B cell (primary cell): ENCODE measurements at regions of chr6 and their contacts with region 1.

Region 1: DNA sequence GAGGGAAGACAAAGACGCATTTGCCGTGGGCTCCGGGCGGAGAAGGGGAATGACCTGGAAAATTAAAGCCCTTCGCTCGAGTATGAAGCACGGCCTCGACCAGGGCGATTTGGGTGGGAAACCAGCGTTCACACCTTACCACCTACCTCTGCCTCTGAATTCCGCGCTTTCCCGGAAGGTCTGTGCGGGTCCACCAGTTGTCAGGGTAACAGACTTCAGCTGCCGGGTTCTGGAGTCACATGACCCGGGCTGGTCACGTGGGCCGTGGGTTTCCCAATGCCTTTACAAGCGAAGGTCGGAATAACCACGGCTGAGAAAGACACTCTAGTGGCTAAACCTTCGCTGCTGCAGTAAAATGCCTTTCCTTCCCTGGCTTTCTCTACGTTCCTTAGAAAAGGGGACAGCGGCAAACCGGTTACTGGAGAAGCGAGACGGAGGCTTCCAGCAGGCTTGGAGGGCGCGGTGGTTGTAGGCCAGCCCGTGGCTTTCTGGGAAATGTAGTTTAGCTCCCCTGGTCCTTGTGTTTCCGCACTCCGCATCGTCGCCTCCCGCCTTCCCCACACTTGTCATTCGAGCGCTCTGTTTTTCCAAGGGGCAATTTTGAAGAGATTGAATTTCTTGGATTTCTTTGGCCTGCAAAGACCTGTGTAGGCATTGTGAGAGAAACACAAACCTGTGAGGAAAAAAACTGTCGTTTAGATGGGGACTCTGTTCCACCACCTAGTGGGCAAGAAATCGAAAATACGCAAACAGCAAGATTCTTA is at the start of gene CEP162:
- DNase-seq: peak; percentile 94
- ATAC-seq: peak; percentile 91
- H3K4me3 ChIP-seq: peak within 1 kb of the TSS; percentile 67 to 99 (median 97)
- H3K4me3 Mint-ChIP-seq: peak within 1 kb of the TSS; percentile 100
- H3K27ac ChIP-seq: peak within 1 kb of the TSS; percentile 30 to 64
- H3K27ac Mint-ChIP-seq: peak within 1 kb of the TSS; percentile 96
- H3K4me1 ChIP-seq: peaks cover 10 to 11% of the 10 kb centered on the region in 2 donors
- H3K4me1 Mint-ChIP-seq: peaks cover 22% of the 10 kb centered on the region
- H3K27me3 ChIP-seq: peaks cover 0 to 19% (median 4%) of the 10 kb centered on the region in 4 experiments
- H3K27me3 Mint-ChIP-seq: peaks cover 14% of the 10 kb centered on the region
- CTCF ChIP-seq: peak; percentile 84
- total RNA-seq, gene CEP162: 13.4 and 15.6 TPM in 2 replicates

Region 2: GRCh38 chr6:82247634-82248232 is 1979.9 kb before region 1 on chr6 and contains the start of gene IBTK:
- CTCF ChIA-PET with region 1: interaction called, 3 read pairs
- POLR2A ChIA-PET with region 1: no interaction called
- intact Hi-C with region 1: loop called (anchors 1 kb)
- DNase-seq: peak; percentile 92
- ATAC-seq: peak; percentile 88
- H3K4me3 ChIP-seq: peak within 1 kb of the TSS; percentile 59 to 96 (median 88)
- H3K4me3 Mint-ChIP-seq: peak within 1 kb of the TSS; percentile 99
- H3K27ac ChIP-seq: peak within 1 kb of the TSS; percentile 82 to 83
- H3K27ac Mint-ChIP-seq: peak within 1 kb of the TSS; percentile 95
- H3K4me1 ChIP-seq: peaks cover 15 to 20% of the 10 kb centered on the region in 2 donors
- H3K4me1 Mint-ChIP-seq: peaks cover 34% of the 10 kb centered on the region
- H3K27me3 ChIP-seq: no peaks in the 10 kb centered on the region
- H3K27me3 Mint-ChIP-seq: peaks cover under 1% of the 10 kb centered on the region
- CTCF ChIP-seq: no peak
- total RNA-seq, gene IBTK: 27.7 and 28.3 TPM in 2 replicates

Region 3: GRCh38 chr6:83192871-83193746 is 1034.5 kb before region 1 on chr6 and contains the starts of genes PGM3 and RWDD2A:
- CTCF ChIA-PET with region 1: no interaction called
- POLR2A ChIA-PET with region 1: no interaction called
- intact Hi-C with region 1: loop called (anchors 1 kb)
- DNase-seq: peak; percentile 94
- ATAC-seq: peak; percentile 97
- H3K4me3 ChIP-seq: peak within 1 kb of the TSS; percentile 58 to 93 (median 85)
- H3K4me3 Mint-ChIP-seq: peak within 1 kb of the TSS; percentile 100
- H3K27ac ChIP-seq: peak within 1 kb of the TSS; percentile 58 to 94
- H3K27ac Mint-ChIP-seq: peak within 1 kb of the TSS; percentile 97
- H3K4me1 ChIP-seq: peaks cover 23% of the 10 kb centered on the region in 2 donors
- H3K4me1 Mint-ChIP-seq: peaks cover 39% of the 10 kb centered on the region
- H3K27me3 ChIP-seq: no peaks in the 10 kb centered on the region
- H3K27me3 Mint-ChIP-seq: no peaks in the 10 kb centered on the region
- CTCF ChIP-seq: no peak
- total RNA-seq, gene PGM3: 24.5 and 35.3 TPM in 2 replicates
- total RNA-seq, gene RWDD2A: 2.7 and 2.9 TPM in 2 replicates

Region 4: GRCh38 chr6:83859410-83860358 is 367.9 kb before region 1 on chr6 and contains the start of gene CYB5R4:
- CTCF ChIA-PET with region 1: interaction called, 10 read pairs
- POLR2A ChIA-PET with region 1: interaction called, 5 read pairs
- intact Hi-C with region 1: loop called (anchors 1 kb)
- DNase-seq: peak; percentile 95
- ATAC-seq: peak; percentile 97
- H3K4me3 ChIP-seq: peak within 1 kb of the TSS; percentile 85 to 98 (median 94)
- H3K4me3 Mint-ChIP-seq: peak within 1 kb of the TSS; percentile 99
- H3K27ac ChIP-seq: peak within 1 kb of the TSS; percentile 83 to 87
- H3K27ac Mint-ChIP-seq: peak within 1 kb of the TSS; percentile 95
- H3K4me1 ChIP-seq: peaks cover 25% of the 10 kb centered on the region in 2 donors
- H3K4me1 Mint-ChIP-seq: peaks cover 46% of the 10 kb centered on the region
- H3K27me3 ChIP-seq: peaks cover 0 to 10% (median 7%) of the 10 kb centered on the region in 4 experiments
- H3K27me3 Mint-ChIP-seq: peaks cover 16% of the 10 kb centered on the region
- CTCF ChIP-seq: peak; percentile 47
- total RNA-seq, gene CYB5R4: 39.6 and 43.7 TPM in 2 replicates

Region 5: DNA sequence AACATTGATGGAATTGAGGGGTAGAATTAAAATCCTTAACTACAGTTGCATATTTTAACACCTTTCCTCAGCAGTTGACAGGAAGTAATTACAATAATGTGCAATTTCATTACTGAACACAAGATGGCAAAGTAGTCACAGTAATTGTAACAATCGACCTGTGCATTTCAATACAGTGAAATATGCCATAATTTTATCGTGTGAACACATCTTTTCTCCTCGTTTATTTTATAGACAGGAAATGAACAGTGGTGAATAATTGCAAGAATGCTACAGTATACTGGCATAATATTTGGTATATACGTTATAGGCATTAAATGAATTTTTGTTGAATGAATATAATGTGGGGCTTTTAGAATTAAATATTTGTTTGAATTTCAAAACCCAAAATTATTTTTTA is 343.1 kb before region 1 on chr6:
- CTCF ChIA-PET with region 1: interaction called, 14 read pairs
- POLR2A ChIA-PET with region 1: no interaction called
- intact Hi-C with region 1: loop called (anchors 1 kb)
- DNase-seq: peak; percentile 62
- ATAC-seq: peak; percentile 51
- H3K4me3 ChIP-seq: no peak overlapping the region
- H3K4me3 Mint-ChIP-seq: no peak overlapping the region
- H3K27ac ChIP-seq: no peak overlapping the region
- H3K27ac Mint-ChIP-seq: no peak overlapping the region
- H3K4me1 ChIP-seq: peaks cover 5% of the 10 kb centered on the region in 2 donors
- H3K4me1 Mint-ChIP-seq: peaks cover 43% of the 10 kb centered on the region
- H3K27me3 ChIP-seq: no peaks in the 10 kb centered on the region
- H3K27me3 Mint-ChIP-seq: no peaks in the 10 kb centered on the region
- CTCF ChIP-seq: peak; percentile 86

Region 6: DNA sequence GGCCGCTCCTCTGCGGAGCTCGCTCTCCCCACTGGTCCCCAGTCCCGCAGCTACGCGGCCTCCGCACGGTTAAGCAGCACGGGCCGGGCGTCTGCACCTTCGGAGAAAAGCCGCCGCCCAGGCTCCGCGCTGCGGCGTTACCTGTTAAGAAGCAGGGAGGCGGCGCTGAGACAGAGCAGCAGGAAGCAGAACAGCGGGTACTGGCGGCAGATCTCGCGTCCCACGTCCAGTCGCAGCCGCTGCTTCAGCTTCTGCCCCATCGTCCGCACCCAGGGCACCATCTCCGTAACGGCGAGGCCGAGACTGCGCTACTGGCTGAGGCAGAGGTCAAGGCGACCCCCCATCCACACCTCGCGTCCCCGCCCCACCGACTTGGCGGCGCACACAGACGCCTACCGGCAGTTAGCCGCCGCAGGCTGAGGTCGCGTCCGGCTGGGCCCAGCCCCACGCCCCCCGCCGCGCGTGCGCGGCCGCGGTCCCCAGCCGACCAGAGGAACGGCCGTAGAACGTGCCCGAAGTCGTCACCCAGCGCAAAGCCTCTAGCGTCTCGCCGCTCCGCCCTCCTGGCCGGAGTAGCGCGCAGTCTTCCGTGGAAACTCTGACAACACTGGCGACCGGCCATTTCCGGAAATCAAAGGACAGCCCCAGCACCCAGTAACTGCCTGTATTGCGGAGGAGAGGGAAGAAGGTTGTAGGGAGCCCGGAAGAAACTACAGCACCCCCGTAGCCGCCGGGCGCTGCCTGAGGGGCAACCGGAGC is 1366.0 kb after region 1 on chr6 and contains the start of gene SNX14:
- CTCF ChIA-PET with region 1: no interaction called
- POLR2A ChIA-PET with region 1: no interaction called
- intact Hi-C with region 1: loop called (anchors 5 kb)
- DNase-seq: peak; percentile 90
- ATAC-seq: peak; percentile 83
- H3K4me3 ChIP-seq: peak within 1 kb of the TSS; percentile 67 to 89 (median 79)
- H3K4me3 Mint-ChIP-seq: peak within 1 kb of the TSS; percentile 100
- H3K27ac ChIP-seq: peak within 1 kb of the TSS; percentile 59 to 73
- H3K27ac Mint-ChIP-seq: peak within 1 kb of the TSS; percentile 99
- H3K4me1 ChIP-seq: peaks cover 13 to 19% of the 10 kb centered on the region in 2 donors
- H3K4me1 Mint-ChIP-seq: peaks cover 39% of the 10 kb centered on the region
- H3K27me3 ChIP-seq: no peaks in the 10 kb centered on the region
- H3K27me3 Mint-ChIP-seq: no peaks in the 10 kb centered on the region
- CTCF ChIP-seq: no peak
- total RNA-seq, gene SNX14: 80.0 and 95.1 TPM in 2 replicates